Activated T-helper 2 cell treated with anti-CD3 and anti-CD28 coated beads, Interferon-gamma antibody, Interleukin-2, Interleukin-4, amounts not matched to agents 10 μg/mL and 5 μg/mL and 100 μg/mL, durations not matched to agents 14 hours and 24 hours and 36 hours (primary cell): ENCODE measurements at regions of chr1 and their contacts with region 1.

Region 1: GRCh38 chr1:15409388-15410222 is at the start of gene EFHD2:
- DNase-seq: peak; percentile 80
- H3K4me3 Mint-ChIP-seq: peak within 1 kb of the TSS; percentile 94
- H3K27ac Mint-ChIP-seq: peak within 1 kb of the TSS; percentile 89
- H3K4me1 Mint-ChIP-seq: peaks cover 30% of the 10 kb centered on the region
- H3K27me3 Mint-ChIP-seq: peaks cover 27% of the 10 kb centered on the region
- total RNA-seq, gene EFHD2: 82.4 and 85.2 TPM in 2 replicates

Region 2: DNA sequence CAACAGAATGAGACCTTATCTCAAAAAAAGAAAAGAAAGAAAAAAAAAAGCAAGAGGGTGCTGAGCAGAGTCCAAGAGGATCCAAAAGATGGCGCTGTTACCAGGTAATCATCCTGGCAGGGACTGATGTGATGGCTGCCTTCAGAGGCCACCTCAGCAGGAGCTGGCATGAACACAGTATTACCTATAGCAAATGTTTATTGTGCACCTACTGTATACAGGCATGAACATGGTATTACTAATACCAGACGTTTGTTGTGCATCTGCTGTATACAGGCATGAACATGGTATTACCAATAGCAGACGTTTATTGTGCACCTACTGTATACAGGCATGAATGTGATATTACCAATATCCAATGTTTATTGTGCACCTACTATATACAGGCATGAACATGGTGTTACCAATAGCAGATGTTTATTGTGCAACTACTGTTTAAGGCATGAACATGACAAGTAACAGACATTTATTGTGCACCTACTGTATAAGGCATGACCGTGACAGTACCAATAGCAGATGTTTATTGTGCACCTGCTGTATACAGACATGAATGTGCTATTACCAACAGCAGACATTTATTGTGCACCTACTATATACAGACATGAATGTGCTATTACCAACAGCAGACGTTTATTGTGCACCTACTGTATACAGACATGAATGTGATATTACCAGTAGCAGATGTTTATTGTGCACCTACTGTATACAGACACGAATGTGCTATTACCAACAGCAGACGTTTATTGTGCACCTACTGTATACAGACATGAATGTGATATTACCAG is 371.2 kb before region 1 on chr1:
- intact Hi-C with region 1: no loop called
- DNase-seq: no peak
- H3K4me3 Mint-ChIP-seq: no peak overlapping the region
- H3K27ac Mint-ChIP-seq: no peak overlapping the region
- H3K4me1 Mint-ChIP-seq: peaks cover 4% of the 10 kb centered on the region
- H3K27me3 Mint-ChIP-seq: no peaks in the 10 kb centered on the region

Region 3: DNA sequence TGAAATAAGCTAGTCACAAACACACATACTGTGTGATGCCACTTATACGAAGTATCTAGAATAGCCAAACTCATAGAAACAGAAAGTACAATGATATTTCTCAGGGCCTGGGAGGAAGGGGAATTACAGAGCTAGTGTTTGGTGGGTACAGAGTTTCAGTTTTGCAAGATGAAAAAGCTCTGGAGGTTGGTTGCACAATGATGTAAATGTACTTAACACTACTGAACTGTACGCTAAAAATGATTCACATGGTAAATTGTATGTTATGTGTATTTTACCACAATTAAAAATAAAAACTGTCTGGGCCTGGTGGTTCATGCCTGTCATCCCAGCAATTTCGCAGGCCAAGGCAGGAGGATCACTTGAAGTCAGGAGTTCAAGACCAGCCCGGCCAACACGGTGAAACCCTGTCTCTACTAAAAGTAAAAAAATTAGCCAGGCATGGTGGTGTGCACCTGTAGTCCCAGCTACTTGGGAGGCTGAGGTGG is 177.8 kb before region 1 on chr1:
- intact Hi-C with region 1: loop called (anchors 5 kb)
- DNase-seq: no peak
- H3K4me3 Mint-ChIP-seq: no peak overlapping the region
- H3K27ac Mint-ChIP-seq: peak overlapping the region; percentile 38
- H3K4me1 Mint-ChIP-seq: peaks cover 27% of the 10 kb centered on the region
- H3K27me3 Mint-ChIP-seq: peaks cover 12% of the 10 kb centered on the region

Region 4: DNA sequence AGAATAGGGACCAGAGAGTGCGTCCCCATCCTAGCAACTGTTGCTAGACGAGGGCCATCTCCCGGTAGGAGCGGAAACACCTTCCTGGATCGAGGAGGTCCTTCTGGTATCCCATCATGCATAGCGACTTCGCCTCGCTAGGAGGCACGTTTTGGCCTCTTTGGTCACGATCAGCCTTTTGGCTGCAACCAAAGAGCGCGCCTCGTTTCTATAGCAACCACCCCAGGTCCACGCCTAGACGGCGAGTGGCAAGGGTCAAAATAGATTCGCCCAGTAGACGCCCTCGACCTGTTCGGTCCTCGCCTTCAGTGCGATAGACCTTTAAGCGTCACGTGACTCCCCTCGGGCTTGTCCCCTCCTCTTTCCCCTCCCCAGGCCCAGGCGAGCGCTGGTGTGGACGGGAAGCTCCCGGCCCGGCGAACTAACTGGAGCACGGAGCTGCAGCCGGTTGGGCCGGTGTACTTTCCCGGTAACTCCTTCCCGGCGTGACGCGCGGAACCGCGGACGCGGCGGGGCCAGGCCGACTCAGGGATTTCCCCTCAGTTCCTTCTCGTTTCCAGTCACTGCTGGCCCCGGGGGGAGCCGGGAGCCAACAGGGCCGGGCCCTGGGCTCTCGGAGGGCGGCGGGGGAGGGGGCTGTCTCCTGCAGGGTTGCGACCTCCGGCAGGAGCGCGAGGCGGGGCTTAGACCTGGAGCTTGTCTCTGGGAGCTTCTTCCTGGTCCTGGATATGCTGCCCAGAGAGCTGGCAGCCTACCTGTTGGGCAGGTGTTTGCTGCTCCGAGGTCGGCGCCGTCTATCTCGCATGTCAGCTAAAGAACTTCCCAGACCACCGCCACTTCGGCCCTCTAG is 117.1 kb after region 1 on chr1 and contains the start of gene DNAJC16:
- intact Hi-C with region 1: loop called (anchors 1 kb)
- DNase-seq: peak; percentile 99
- H3K4me3 Mint-ChIP-seq: peak within 1 kb of the TSS; percentile 87
- H3K27ac Mint-ChIP-seq: peak within 1 kb of the TSS; percentile 98
- H3K4me1 Mint-ChIP-seq: peaks cover 44% of the 10 kb centered on the region
- H3K27me3 Mint-ChIP-seq: no peaks in the 10 kb centered on the region
- total RNA-seq, gene DNAJC16: 10.9 and 18.7 TPM in 2 replicates